Mucosa of descending colon (tissue), 3 donors: ENCODE measurements at regions of chr14 and their contacts with region 1.

Region 1: GRCh38 chr14:20350860-20351259 is 7.4 kb downstream of the PARP2 start:
- DNase-seq: no peak
- ATAC-seq: no peak
- H3K4me3 ChIP-seq: no peak overlapping the region
- H3K4me1 ChIP-seq: no peaks in the 10 kb centered on the region
- CTCF ChIP-seq: no peak

Region 2: GRCh38 chr14:20400965-20401593 is 50.2 kb after region 1 on chr14:
- intact Hi-C with region 1: loop called in 1 of 2 experiments (anchors 10 kb)
- DNase-seq: no peak
- ATAC-seq: peak; percentile 87
- H3K4me3 ChIP-seq: no peak overlapping the region
- H3K4me1 ChIP-seq: no peaks in the 10 kb centered on the region
- CTCF ChIP-seq: no peak